B cell (primary cell): ENCODE measurements at regions of chr1 and their contacts with region 1.

Region 1: DNA sequence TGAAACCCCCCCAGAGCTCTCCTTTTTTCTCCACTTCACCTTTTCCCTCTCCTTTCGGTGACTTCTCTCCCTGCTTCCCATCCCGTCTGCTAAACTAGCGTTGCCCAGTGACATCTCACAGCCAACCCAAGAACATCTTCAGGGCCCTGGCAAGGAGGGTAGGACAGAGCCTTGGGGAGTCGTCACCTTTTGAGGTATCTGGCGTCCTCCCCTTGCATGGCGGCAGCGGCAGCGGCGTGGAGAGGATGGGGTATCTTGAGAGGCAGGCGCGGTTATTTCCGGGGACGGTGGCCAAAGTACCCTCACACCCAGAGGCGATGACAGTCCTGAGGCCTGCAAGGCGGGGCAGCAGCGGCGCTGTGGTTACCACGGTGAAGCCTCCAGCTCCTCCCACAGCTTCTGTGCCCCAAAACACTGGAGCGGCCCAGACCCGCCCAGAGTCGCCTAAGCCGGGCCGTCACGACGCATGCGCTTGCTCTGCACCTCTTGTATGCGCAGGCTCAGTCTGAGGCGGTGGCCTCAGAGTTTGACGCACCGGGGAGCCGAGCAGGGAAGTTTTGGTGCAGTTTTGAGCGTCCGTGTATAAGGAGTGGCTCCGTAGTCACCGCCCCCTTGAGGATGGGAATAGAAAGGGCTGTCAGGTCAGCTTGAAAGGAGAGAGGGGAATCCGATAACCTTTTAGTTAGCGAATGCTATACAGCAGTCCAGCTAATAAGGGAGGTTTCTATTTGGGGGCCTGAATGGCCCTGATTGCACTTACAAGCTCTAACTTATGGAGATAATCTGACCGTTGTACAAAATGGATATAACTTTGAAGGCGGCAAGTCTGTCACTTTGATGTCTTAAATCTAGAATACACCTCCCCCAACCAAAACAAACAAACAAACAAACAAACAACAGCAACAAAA is at the start of gene KIFAP3:
- DNase-seq: peak; percentile 98
- ATAC-seq: peak; percentile 93
- H3K4me3 ChIP-seq: peak within 1 kb of the TSS; percentile 43 to 78 (median 66)
- H3K4me3 Mint-ChIP-seq: peak within 1 kb of the TSS; percentile 92
- H3K27ac ChIP-seq: peak within 1 kb of the TSS; percentile 63 to 84
- H3K27ac Mint-ChIP-seq: peak within 1 kb of the TSS; percentile 95
- H3K4me1 ChIP-seq: peaks cover 19 to 20% of the 10 kb centered on the region in 2 donors
- H3K4me1 Mint-ChIP-seq: peaks cover 44% of the 10 kb centered on the region
- H3K27me3 ChIP-seq: no peaks in the 10 kb centered on the region
- H3K27me3 Mint-ChIP-seq: peaks cover 11% of the 10 kb centered on the region
- CTCF ChIP-seq: peak; percentile 52
- total RNA-seq, gene KIFAP3: 14.1 and 14.9 TPM in 2 replicates

Region 2: DNA sequence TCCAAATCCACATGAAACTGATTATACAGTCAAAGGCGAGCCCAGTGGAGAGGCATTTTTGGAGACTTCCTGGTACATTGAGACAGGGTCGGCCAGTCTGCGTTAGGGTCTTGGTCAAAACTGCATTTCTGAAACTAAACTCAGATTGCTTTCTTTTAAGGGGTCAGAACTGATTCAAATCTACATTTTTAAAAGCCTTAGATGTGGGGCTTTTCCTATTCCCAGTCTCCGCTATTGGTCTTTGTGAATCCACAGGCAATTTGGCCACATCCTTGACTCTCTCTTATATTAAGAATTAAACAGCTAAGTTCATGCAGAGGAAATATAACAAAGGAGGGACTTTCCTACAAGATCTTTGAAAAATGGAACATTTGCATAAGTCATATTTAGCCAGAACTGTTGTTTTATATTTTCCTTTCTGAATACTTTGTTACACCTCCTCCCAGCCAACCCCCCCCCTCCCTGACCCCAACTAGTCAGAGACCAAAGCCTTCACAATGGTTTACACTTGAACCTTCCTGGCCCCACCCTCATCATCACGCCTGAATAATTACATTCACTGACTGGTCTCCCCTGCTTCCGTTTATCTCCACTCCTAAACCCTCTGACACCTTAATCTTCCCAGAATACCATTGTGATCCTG is 394.0 kb before region 1 on chr1:
- CTCF ChIA-PET with region 1: no interaction called
- POLR2A ChIA-PET with region 1: no interaction called
- intact Hi-C with region 1: loop called (anchors 10 kb)
- DNase-seq: peak; percentile 70
- ATAC-seq: peak; percentile 84
- H3K4me3 ChIP-seq: peak overlapping the region in 2 of 5 experiments; percentile 6 to 16
- H3K4me3 Mint-ChIP-seq: peak overlapping the region; percentile 75
- H3K27ac ChIP-seq: peak overlapping the region; percentile 88 to 92
- H3K27ac Mint-ChIP-seq: peak overlapping the region; percentile 95
- H3K4me1 ChIP-seq: peaks cover 84 to 96% of the 10 kb centered on the region in 2 donors
- H3K4me1 Mint-ChIP-seq: peaks cover 61% of the 10 kb centered on the region
- H3K27me3 ChIP-seq: no peaks in the 10 kb centered on the region
- H3K27me3 Mint-ChIP-seq: no peaks in the 10 kb centered on the region
- CTCF ChIP-seq: no peak

Region 3: DNA sequence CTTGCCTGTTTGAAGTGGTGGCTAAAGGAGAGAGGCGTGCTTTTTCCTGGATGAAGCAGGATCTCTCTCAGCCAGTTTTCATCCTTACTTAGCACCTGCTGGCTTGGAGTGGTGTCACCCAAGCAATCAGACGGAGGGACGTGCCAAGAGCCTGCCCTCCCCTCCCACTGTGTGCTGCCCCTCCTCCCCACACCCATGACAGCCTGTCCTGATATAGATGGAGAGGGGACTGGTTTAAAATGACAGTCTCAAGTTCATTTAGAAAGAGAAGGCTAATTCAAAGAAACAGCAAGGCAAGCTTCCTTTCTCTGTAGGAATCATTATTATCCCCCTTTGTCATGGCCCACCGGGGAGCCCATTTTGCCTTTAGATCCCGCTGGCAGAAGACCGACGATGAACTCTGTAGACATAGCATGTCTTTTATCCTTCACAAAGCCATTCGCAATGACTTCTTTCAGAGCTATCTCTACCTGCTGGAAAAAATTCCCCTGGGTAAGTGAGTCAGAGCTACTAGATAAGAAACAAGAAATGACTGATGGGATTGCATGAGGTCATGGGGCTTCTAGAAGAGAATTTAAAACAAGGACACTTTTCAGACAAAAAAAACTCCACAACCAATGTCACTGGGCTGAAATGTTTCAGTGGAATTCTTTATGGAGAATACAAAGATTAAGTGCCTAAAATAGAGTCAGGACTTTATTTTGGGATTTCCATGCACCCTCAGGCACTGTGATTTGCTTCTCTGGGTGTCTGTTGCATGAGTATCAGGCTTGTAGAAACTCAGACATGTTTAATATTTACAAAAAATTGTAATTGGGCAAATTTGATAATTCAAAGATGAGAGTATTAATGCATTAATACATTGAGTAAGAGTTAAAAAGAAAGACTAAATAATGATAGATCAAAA is 71.5 kb after region 1 on chr1 and contains the start of gene NTMT2:
- CTCF ChIA-PET with region 1: no interaction called
- POLR2A ChIA-PET with region 1: no interaction called
- intact Hi-C with region 1: no loop called
- DNase-seq: no peak
- ATAC-seq: no peak
- H3K4me3 ChIP-seq: no peak within 1 kb of the TSS
- H3K4me3 Mint-ChIP-seq: no peak within 1 kb of the TSS
- H3K27ac ChIP-seq: no peak within 1 kb of the TSS
- H3K27ac Mint-ChIP-seq: no peak within 1 kb of the TSS
- H3K4me1 ChIP-seq: no peaks in the 10 kb centered on the region
- H3K4me1 Mint-ChIP-seq: no peaks in the 10 kb centered on the region
- H3K27me3 ChIP-seq: no peaks in the 10 kb centered on the region
- H3K27me3 Mint-ChIP-seq: peaks cover 14% of the 10 kb centered on the region
- CTCF ChIP-seq: no peak
- total RNA-seq, gene NTMT2: not detected in 2 replicates

Region 4: GRCh38 chr1:170520601-170521000 is 446.1 kb after region 1 on chr1:
- CTCF ChIA-PET with region 1: no interaction called
- POLR2A ChIA-PET with region 1: no interaction called
- intact Hi-C with region 1: no loop called
- DNase-seq: no peak
- ATAC-seq: no peak
- H3K4me3 ChIP-seq: no peak overlapping the region
- H3K4me3 Mint-ChIP-seq: no peak overlapping the region
- H3K27ac ChIP-seq: no peak overlapping the region
- H3K27ac Mint-ChIP-seq: no peak overlapping the region
- H3K4me1 ChIP-seq: no peaks in the 10 kb centered on the region
- H3K4me1 Mint-ChIP-seq: no peaks in the 10 kb centered on the region
- H3K27me3 ChIP-seq: peaks cover 0 to 35% (median 6%) of the 10 kb centered on the region in 4 experiments
- H3K27me3 Mint-ChIP-seq: peaks cover 35% of the 10 kb centered on the region
- CTCF ChIP-seq: no peak

Region 5: GRCh38 chr1:170531758-170532657 is 457.5 kb after region 1 on chr1 and contains the start of gene GORAB:
- CTCF ChIA-PET with region 1: no interaction called
- POLR2A ChIA-PET with region 1: no interaction called
- intact Hi-C with region 1: loop called (anchors 2 kb)
- DNase-seq: peak; percentile 91
- ATAC-seq: peak; percentile 97
- H3K4me3 ChIP-seq: peak within 1 kb of the TSS; percentile 72 to 95 (median 89)
- H3K4me3 Mint-ChIP-seq: no peak within 1 kb of the TSS
- H3K27ac ChIP-seq: peak within 1 kb of the TSS; percentile 82 to 92
- H3K27ac Mint-ChIP-seq: no peak within 1 kb of the TSS
- H3K4me1 ChIP-seq: peaks cover 12 to 17% of the 10 kb centered on the region in 2 donors
- H3K4me1 Mint-ChIP-seq: peaks cover 13% of the 10 kb centered on the region
- H3K27me3 ChIP-seq: no peaks in the 10 kb centered on the region
- H3K27me3 Mint-ChIP-seq: no peaks in the 10 kb centered on the region
- CTCF ChIP-seq: no peak
- total RNA-seq, gene GORAB: 24.2 and 32.5 TPM in 2 replicates